CD4-positive, alpha-beta T cell (primary cell): ENCODE measurements at regions of chr1 and their contacts with region 1.

Region 1: GRCh38 chr1:100132566-100133477 is at the starts of genes SASS6 and TRMT13:
- DNase-seq: peak; percentile 83 to 97 (median 90)
- ATAC-seq: peak; percentile 97
- H3K4me3 ChIP-seq: peak within 1 kb of the TSS; percentile 77
- H3K4me3 Mint-ChIP-seq: peak within 1 kb of the TSS; percentile 89
- H3K27ac ChIP-seq: peak within 1 kb of the TSS; percentile 42 to 43
- H3K27ac Mint-ChIP-seq: peak within 1 kb of the TSS; percentile 92
- H3K4me1 ChIP-seq: peaks cover 12% of the 10 kb centered on the region
- H3K4me1 Mint-ChIP-seq: peaks cover 43% of the 10 kb centered on the region
- H3K27me3 ChIP-seq: no peaks in the 10 kb centered on the region
- H3K27me3 Mint-ChIP-seq: no peaks in the 10 kb centered on the region
- CTCF ChIP-seq: no peak
- total RNA-seq, gene SASS6: 1.7 to 1.8 TPM
- total RNA-seq, gene TRMT13: 6.3 to 6.9 TPM

Region 2: DNA sequence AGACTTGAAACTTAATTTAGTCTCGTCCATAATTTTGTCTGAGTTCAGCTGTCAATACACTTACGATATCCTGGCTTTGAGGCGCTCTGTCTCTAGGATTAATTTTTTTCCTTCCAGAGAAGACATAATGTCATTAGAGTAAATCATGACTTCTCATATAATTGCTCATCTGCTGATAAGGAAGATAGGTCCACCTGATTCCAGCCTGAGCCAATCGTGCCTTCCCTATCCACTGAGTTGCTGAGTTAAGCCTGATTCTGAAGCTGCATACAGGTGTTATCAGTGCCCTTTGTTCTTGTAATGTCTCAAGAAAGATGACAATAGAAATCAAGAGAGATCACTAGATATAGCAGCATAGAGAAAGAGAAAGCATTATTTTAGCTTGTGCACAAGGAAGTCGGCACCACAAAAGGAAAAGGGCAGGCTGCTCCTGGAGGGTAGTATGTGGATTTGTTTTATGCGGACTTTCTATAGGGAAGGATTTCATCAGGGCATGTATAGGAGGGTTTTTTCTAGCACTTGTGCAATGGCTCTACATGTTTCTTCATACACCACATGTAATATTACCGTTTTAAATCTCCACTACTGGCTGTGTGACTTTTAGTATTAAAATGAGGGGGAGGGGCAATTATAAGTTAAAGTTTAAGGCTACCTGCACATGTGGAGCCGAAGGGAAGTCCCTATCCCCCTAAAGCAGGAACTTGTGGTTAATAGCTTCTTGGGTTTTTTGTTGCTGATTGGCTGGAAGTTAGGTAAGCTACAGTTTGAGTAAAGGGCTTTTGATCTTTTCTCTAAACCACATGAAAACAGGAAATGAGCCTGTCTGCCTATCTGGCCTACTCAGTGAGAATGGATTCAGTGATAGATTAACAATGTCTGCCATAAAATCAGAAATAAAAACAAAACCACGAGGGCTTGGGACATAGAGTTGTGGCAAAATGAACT is 1261.6 kb before region 1 on chr1:
- CTCF ChIA-PET with region 1: no interaction called
- POLR2A ChIA-PET with region 1: no interaction called
- intact Hi-C with region 1: loop called in 1 of 2 experiments (anchors 2 kb)
- DNase-seq: peak in 12 of 14 experiments; percentile 8 to 96 (median 41)
- ATAC-seq: peak; percentile 92
- H3K4me3 ChIP-seq: peak overlapping the region; percentile 48
- H3K4me3 Mint-ChIP-seq: peak overlapping the region; percentile 86
- H3K27ac ChIP-seq: peak overlapping the region; percentile 59 to 84
- H3K27ac Mint-ChIP-seq: peak overlapping the region; percentile 91
- H3K4me1 ChIP-seq: peaks cover 18% of the 10 kb centered on the region
- H3K4me1 Mint-ChIP-seq: peaks cover 55% of the 10 kb centered on the region
- H3K27me3 ChIP-seq: no peaks in the 10 kb centered on the region
- H3K27me3 Mint-ChIP-seq: no peaks in the 10 kb centered on the region
- CTCF ChIP-seq: no peak

Region 3: DNA sequence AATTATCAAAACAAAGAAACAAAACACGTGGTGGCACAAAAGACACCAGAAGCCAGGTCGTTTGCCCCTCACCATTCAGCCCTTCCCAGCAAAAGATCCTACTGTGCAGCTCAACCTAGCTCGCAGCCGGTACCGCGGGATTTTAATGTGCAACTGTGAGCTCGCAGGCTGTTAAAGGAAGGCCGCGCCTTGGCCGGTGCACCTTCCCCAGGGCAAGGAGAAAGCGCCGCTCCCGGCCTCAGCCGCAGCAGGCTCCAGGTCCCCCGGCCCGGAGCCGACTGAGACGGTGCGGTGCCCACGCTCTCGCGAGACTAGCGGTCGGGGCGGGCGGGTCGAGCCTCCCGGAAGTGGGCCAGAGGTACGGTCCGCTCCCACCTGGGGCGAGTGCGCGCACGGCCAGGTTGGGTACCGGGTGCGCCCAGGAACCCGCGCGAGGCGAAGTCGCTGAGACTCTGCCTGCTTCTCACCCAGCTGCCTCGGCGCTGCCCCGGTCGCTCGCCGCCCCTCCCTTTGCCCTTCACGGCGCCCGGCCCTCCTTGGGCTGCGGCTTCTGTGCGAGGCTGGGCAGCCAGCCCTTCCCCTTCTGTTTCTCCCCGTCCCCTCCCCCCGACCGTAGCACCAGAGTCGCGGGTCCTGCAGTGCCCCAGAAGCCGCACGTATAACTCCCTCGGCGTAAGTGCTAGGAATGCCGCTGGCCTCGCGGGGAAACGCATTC is 282.9 kb before region 1 on chr1 and contains the start of gene AGL:
- CTCF ChIA-PET with region 1: no interaction called
- POLR2A ChIA-PET with region 1: interaction called, 3 read pairs
- intact Hi-C with region 1: loop called in 1 of 2 experiments (anchors 5 kb)
- DNase-seq: peak; percentile 76 to 93 (median 83)
- ATAC-seq: peak; percentile 97
- H3K4me3 ChIP-seq: peak within 1 kb of the TSS; percentile 95
- H3K4me3 Mint-ChIP-seq: peak within 1 kb of the TSS; percentile 95
- H3K27ac ChIP-seq: peak within 1 kb of the TSS; percentile 64 to 65
- H3K27ac Mint-ChIP-seq: peak within 1 kb of the TSS; percentile 88
- H3K4me1 ChIP-seq: peaks cover 14% of the 10 kb centered on the region
- H3K4me1 Mint-ChIP-seq: peaks cover 42% of the 10 kb centered on the region
- H3K27me3 ChIP-seq: no peaks in the 10 kb centered on the region
- H3K27me3 Mint-ChIP-seq: no peaks in the 10 kb centered on the region
- CTCF ChIP-seq: no peak
- total RNA-seq, gene AGL: 8.6 to 9.6 TPM

Region 4: GRCh38 chr1:100037927-100038659 is 94.7 kb before region 1 on chr1:
- CTCF ChIA-PET with region 1: no interaction called
- POLR2A ChIA-PET with region 1: interaction called, 16 read pairs
- intact Hi-C with region 1: loop called (anchors 1 to 2 kb)
- DNase-seq: peak; percentile 76 to 96 (median 84)
- ATAC-seq: peak; percentile 78
- H3K4me3 ChIP-seq: peak overlapping the region; percentile 91
- H3K4me3 Mint-ChIP-seq: peak overlapping the region; percentile 98
- H3K27ac ChIP-seq: peak overlapping the region; percentile 94 to 98
- H3K27ac Mint-ChIP-seq: peak overlapping the region; percentile 98
- H3K4me1 ChIP-seq: peaks cover 28% of the 10 kb centered on the region
- H3K4me1 Mint-ChIP-seq: peaks cover 58% of the 10 kb centered on the region
- H3K27me3 ChIP-seq: no peaks in the 10 kb centered on the region
- H3K27me3 Mint-ChIP-seq: no peaks in the 10 kb centered on the region
- CTCF ChIP-seq: no peak

Region 5: GRCh38 chr1:100100202-100100601 is 32.6 kb before region 1 on chr1:
- CTCF ChIA-PET with region 1: no interaction called
- POLR2A ChIA-PET with region 1: no interaction called
- intact Hi-C with region 1: no loop called
- DNase-seq: no peak
- ATAC-seq: no peak
- H3K4me3 ChIP-seq: no peak overlapping the region
- H3K4me3 Mint-ChIP-seq: no peak overlapping the region
- H3K27ac ChIP-seq: no peak overlapping the region
- H3K27ac Mint-ChIP-seq: no peak overlapping the region
- H3K4me1 ChIP-seq: no peaks in the 10 kb centered on the region
- H3K4me1 Mint-ChIP-seq: no peaks in the 10 kb centered on the region
- H3K27me3 ChIP-seq: no peaks in the 10 kb centered on the region
- H3K27me3 Mint-ChIP-seq: no peaks in the 10 kb centered on the region
- CTCF ChIP-seq: no peak

Region 6: DNA sequence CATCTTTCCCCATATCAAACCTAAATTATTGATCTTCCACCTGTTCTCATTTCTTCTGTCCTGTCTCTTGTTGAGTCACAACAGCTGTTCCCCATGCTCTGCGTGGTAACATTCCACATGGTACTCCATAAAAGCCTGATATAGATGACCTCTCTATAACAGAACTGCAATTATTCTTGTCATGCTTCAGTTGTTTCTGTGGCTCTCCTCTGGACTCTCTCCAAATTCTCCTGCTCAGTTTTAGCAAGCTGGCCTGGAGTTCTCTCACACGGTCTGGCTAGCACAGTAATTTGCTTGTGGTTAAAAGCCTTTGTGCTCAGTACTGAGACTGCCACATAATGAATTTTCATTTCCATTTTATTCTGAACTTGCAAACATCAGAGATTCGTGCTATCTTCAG is 55.8 kb after region 1 on chr1:
- CTCF ChIA-PET with region 1: no interaction called
- POLR2A ChIA-PET with region 1: no interaction called
- intact Hi-C with region 1: no loop called
- DNase-seq: no peak
- ATAC-seq: no peak
- H3K4me3 ChIP-seq: no peak overlapping the region
- H3K4me3 Mint-ChIP-seq: no peak overlapping the region
- H3K27ac ChIP-seq: no peak overlapping the region
- H3K27ac Mint-ChIP-seq: no peak overlapping the region
- H3K4me1 ChIP-seq: no peaks in the 10 kb centered on the region
- H3K4me1 Mint-ChIP-seq: no peaks in the 10 kb centered on the region
- H3K27me3 ChIP-seq: no peaks in the 10 kb centered on the region
- H3K27me3 Mint-ChIP-seq: no peaks in the 10 kb centered on the region
- CTCF ChIP-seq: no peak

Region 7: DNA sequence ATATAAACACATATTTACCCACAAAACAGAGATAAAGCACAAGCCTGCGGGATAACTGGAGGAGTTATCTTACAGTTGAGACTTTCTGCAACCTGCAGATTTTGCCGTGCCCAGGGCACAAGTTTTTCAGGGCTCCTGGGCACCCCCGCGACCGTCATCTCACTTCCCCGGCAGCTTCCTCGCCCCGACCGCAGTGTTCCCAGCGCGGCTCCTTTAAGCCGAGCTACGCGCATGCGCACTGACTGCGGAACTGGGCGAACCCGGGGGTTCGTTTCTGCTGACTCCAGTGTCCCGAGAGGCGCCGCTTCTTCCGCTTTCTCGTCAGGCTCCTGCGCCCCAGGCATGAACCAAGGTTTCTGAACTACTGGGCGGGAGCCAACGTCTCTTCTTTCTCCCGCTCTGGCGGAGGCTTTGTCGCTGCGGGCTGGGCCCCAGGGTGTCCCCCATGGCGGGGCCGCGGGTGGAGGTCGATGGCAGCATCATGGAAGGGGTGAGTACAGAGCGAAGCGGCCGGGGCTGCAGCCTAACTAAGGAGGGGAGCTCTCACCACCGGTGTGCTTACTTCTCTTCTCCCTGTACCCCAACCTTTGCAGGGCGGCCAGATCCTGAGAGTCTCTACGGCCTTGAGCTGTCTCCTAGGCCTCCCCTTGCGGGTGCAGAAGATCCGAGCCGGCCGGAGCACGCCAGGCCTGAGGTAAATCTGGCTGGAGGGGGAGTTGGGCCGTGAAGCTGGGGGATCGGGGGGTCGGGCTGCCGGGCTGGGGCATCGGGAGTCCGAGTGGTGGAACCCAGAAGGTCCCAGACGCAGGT is 133.3 kb after region 1 on chr1 and contains the start of gene RTCA:
- CTCF ChIA-PET with region 1: no interaction called
- POLR2A ChIA-PET with region 1: interaction called, 10 read pairs
- intact Hi-C with region 1: loop called (anchors 1 to 5 kb)
- DNase-seq: peak; percentile 88 to 98 (median 94)
- ATAC-seq: peak; percentile 95
- H3K4me3 ChIP-seq: peak within 1 kb of the TSS; percentile 96
- H3K4me3 Mint-ChIP-seq: peak within 1 kb of the TSS; percentile 99
- H3K27ac ChIP-seq: peak within 1 kb of the TSS; percentile 62 to 67
- H3K27ac Mint-ChIP-seq: peak within 1 kb of the TSS; percentile 93
- H3K4me1 ChIP-seq: peaks cover 41% of the 10 kb centered on the region
- H3K4me1 Mint-ChIP-seq: peaks cover 60% of the 10 kb centered on the region
- H3K27me3 ChIP-seq: no peaks in the 10 kb centered on the region
- H3K27me3 Mint-ChIP-seq: no peaks in the 10 kb centered on the region
- CTCF ChIP-seq: no peak
- total RNA-seq, gene RTCA: 62.1 to 67.1 TPM

Region 8: GRCh38 chr1:100895540-100896483 is 763.0 kb after region 1 on chr1 and contains the start of gene SLC30A7:
- CTCF ChIA-PET with region 1: no interaction called
- POLR2A ChIA-PET with region 1: interaction called, 4 read pairs
- intact Hi-C with region 1: loop called in 1 of 2 experiments (anchors 10 kb)
- DNase-seq: peak; percentile 91 to 98 (median 97)
- ATAC-seq: peak; percentile 71
- H3K4me3 ChIP-seq: peak within 1 kb of the TSS; percentile 93
- H3K4me3 Mint-ChIP-seq: peak within 1 kb of the TSS; percentile 98
- H3K27ac ChIP-seq: peak within 1 kb of the TSS; percentile 98 to 100
- H3K27ac Mint-ChIP-seq: peak within 1 kb of the TSS; percentile 99
- H3K4me1 ChIP-seq: peaks cover 10% of the 10 kb centered on the region
- H3K4me1 Mint-ChIP-seq: peaks cover 69% of the 10 kb centered on the region
- H3K27me3 ChIP-seq: no peaks in the 10 kb centered on the region
- H3K27me3 Mint-ChIP-seq: no peaks in the 10 kb centered on the region
- CTCF ChIP-seq: no peak
- total RNA-seq, gene SLC30A7: 21.6 to 21.7 TPM